Activated CD4-positive, alpha-beta T cell treated with anti-CD3 and anti-CD28 coated beads, Interleukin-2, amount 10 ng/mL, durations not matched to agents 24 days and 14 days (primary cell): ENCODE measurements at regions of chr18 and their contacts with region 1.

Region 1: DNA sequence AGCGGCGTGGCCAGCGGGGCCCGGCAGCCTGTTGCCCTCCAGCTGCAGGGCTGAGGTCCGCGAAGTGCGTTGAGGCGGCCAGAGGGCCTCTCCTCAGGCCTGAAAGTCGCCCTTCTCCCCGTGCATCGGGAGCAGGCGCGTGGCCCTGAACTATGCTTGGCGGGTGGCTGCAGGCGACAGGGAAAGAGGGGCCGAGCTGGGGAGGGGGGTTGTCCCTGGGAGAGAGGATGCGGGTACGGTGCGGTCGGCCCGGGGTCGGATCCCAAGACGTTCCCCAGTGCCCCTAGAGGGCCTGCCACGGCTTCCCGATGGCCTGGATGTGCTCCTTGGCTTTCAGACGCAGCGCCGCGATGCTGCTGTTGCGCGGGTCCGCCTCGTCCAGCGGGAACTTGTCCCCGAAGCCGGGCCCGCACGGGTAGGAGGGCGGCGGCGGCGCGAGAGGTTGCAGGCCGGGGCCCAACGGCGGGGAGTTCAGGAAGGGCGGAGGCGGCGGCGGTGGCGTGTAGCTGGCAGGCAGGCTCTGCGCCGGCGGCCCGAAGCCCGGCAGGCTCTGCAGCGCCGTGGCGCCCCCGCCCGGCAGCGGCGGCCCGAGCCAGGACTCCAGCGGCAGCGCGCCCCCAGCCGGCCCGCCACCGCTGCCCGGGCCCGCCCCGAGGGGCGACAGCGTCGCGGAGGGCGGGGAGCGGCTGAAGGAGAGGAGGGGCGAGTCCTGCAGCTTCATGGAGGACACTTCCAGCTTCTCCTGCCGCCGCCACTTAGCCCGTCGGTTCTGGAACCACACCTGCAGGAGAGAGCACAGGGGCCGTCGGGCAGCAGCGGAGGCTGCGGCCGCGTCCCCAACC is 4.3 kb downstream of the RAX start:
- DNase-seq: peak; percentile 81
- H3K4me3 Mint-ChIP-seq: peak overlapping the region; percentile 72
- H3K27ac Mint-ChIP-seq: no peak overlapping the region
- H3K4me1 Mint-ChIP-seq: peaks cover 18% of the 10 kb centered on the region
- H3K27me3 Mint-ChIP-seq: peaks cover 78% of the 10 kb centered on the region

Region 2: GRCh38 chr18:57434536-57435494 is 1834.1 kb before region 1 on chr18 and contains the start of gene ONECUT2:
- intact Hi-C with region 1: loop called (anchors 5 kb)
- DNase-seq: peak; percentile 75
- H3K4me3 Mint-ChIP-seq: peak within 1 kb of the TSS; percentile 56
- H3K27ac Mint-ChIP-seq: peak within 1 kb of the TSS; percentile 72
- H3K4me1 Mint-ChIP-seq: peaks cover 18% of the 10 kb centered on the region
- H3K27me3 Mint-ChIP-seq: peaks cover 84% of the 10 kb centered on the region
- total RNA-seq, gene ONECUT2: not detected in 2 replicates

Region 3: GRCh38 chr18:58639751-58640427 is 629.1 kb before region 1 on chr18:
- intact Hi-C with region 1: no loop called
- DNase-seq: no peak
- H3K4me3 Mint-ChIP-seq: no peak overlapping the region
- H3K27ac Mint-ChIP-seq: no peak overlapping the region
- H3K4me1 Mint-ChIP-seq: peaks cover 19% of the 10 kb centered on the region
- H3K27me3 Mint-ChIP-seq: peaks cover 8% of the 10 kb centered on the region

Region 4: DNA sequence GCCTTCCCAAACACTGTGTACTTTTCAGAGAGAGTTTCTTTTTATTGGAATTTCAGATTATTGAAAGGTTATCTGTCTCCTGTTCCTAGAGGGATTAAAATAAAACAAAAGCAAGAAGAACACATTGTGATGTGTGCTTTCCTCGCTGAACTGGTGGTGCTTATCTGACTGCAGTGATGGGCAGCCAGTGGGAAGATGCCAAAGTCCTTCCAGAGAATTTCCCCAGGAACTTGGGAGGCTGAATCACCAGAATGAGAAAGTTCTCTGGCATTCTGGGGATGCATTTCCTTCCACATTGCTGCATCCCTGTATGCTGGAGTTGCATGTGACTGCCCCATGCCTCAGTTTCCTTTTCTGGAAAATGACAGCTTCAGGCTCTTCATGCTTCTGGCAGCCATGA is 183.1 kb before region 1 on chr18:
- intact Hi-C with region 1: loop called (anchors 1 kb)
- DNase-seq: no peak
- H3K4me3 Mint-ChIP-seq: no peak overlapping the region
- H3K27ac Mint-ChIP-seq: no peak overlapping the region
- H3K4me1 Mint-ChIP-seq: peaks cover 5% of the 10 kb centered on the region
- H3K27me3 Mint-ChIP-seq: peaks cover 14% of the 10 kb centered on the region

Region 5: GRCh38 chr18:59220784-59221765 is 47.9 kb before region 1 on chr18:
- intact Hi-C with region 1: loop called (anchors 5 kb)
- DNase-seq: no peak
- H3K4me3 Mint-ChIP-seq: no peak overlapping the region
- H3K27ac Mint-ChIP-seq: no peak overlapping the region
- H3K4me1 Mint-ChIP-seq: peaks cover 2% of the 10 kb centered on the region
- H3K27me3 Mint-ChIP-seq: peaks cover 78% of the 10 kb centered on the region

Region 6: DNA sequence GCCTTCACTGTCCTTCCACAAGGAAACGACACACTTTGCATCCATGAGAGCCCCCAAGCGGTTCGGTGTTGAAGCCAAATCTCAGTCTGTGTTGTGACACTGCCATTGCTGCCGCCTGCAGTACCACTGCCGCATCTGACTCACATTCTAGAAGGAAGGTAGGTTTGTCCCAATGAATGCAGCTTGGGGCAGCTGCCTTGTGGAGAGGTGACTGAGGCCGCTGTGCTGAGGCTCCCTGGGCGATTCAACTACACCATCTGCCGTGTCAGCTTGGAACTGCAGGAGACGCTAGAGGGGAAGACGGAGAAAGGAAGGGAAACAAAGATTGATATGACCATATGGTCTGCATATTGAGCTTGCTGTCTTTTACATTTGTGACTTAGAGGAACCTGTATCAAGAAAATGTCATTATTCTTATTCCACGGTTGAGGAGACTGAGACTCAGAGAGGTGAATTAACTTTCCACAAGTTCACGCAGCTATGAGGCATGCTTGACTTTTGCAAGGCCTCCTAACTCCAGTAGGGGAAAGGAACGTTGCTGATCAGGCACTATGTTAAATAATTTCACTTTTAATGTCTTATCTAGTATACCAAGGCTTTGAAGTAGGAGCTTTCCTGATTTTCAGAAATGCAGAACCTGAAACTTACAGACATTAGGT is 133.6 kb after region 1 on chr18:
- intact Hi-C with region 1: loop called (anchors 5 kb)
- DNase-seq: peak; percentile 92
- H3K4me3 Mint-ChIP-seq: no peak overlapping the region
- H3K27ac Mint-ChIP-seq: no peak overlapping the region
- H3K4me1 Mint-ChIP-seq: peaks cover 4% of the 10 kb centered on the region
- H3K27me3 Mint-ChIP-seq: peaks cover 11% of the 10 kb centered on the region

Region 7: DNA sequence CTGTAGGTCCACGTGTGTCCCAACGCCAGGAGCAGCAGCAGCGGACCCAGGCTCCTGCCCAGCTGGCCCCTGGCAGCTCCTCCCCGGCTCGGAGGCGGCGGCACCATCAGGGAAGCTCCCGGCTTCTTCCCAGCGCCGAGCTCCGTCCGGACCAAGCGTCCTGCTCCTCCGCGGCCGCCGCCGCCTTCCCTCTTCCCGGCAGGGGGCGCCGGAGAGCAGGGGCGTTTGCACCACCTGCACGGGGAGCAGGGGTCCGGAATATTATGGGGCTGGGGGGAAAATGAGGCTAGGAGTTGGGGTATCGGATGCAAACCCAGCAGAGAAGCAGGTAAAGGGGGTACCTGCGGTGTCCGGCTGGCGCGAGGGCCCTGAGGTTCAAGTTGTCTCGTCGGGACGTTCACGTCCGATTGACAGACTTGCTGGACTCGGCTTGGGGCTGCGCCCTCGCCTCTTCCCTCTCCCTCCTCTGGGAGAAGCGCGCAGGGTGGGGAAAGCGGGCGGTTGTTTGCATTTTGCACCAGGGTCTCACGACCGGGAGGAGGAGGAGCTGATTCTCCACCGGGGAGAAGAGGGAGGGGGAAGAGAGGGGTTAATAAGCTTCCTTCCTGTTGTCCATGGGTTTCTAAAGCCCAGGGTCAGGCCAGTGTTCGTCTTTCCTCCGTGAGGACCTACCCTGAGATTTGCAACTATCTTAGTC is 428.4 kb after region 1 on chr18 and contains the start of gene CCBE1:
- intact Hi-C with region 1: loop called (anchors 10 kb)
- DNase-seq: peak; percentile 86
- H3K4me3 Mint-ChIP-seq: peak within 1 kb of the TSS; percentile 69
- H3K27ac Mint-ChIP-seq: peak within 1 kb of the TSS; percentile 54
- H3K4me1 Mint-ChIP-seq: peaks cover 9% of the 10 kb centered on the region
- H3K27me3 Mint-ChIP-seq: peaks cover 67% of the 10 kb centered on the region
- total RNA-seq, gene CCBE1: not detected in 2 replicates